ENCODE measurements at regions of chr9 and their contacts with region 1.

Region 1: GRCh38 chr9:115013998-115014397 is 83.6 kb upstream of the TNFSF8 start:
- DNase-seq: peak; percentile 59 to 74 (median 64)
- ATAC-seq: peak; percentile 77
- H3K4me3 ChIP-seq: no peak overlapping the region
- H3K4me1 ChIP-seq: no peaks in the 10 kb centered on the region
- CTCF ChIP-seq: peak; percentile 57

Region 2: GRCh38 chr9:114681594-114682332 is 332.2 kb before region 1 on chr9 and contains the start of gene TEX48:
- intact Hi-C with region 1: loop called (anchors 2 to 5 kb)
- DNase-seq: peak; percentile 59 to 90 (median 63)
- ATAC-seq: peak; percentile 99
- H3K4me3 ChIP-seq: no peak within 1 kb of the TSS
- H3K4me1 ChIP-seq: no peaks in the 10 kb centered on the region
- CTCF ChIP-seq: peak; percentile 57
- total RNA-seq, gene TEX48: not detected

Region 3: DNA sequence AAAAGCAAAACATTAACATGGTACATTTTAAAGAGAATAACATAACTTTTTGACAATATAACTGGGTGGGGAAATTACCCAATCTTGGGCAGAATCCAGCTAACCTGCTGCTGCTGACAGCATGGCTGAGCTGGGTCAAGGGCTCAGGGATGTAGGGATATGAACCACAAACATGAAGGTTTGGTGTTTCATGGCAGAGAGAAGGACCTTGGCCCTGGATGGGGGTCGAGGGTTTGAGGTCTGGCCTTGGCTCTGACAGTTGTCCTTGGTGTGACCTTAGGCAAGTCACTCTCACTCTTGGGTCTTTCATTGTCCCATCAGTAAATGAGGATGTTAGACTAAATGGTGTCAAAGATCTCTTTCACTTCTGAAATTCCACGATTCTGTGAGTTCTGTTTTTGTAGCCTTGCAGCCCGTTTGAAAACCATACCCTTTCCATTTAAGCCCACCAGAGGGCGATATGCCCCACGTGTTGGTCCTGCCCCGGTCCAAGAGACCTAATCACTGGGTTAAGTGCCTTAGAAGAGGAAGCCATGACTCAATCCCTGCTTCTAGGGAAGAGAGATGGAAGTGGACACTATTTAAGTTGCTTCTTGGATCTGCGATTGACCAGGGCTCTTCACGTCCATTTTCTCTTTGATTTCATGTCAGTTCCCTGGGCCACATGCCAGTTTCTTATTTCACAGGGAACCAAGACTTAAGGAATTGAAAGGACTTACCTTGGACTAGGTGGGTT is 275.2 kb before region 1 on chr9:
- intact Hi-C with region 1: loop called (anchors 5 to 10 kb)
- DNase-seq: peak in 2 of 3 donors; percentile 70 to 84
- ATAC-seq: peak; percentile 99
- H3K4me3 ChIP-seq: no peak overlapping the region
- H3K4me1 ChIP-seq: no peaks in the 10 kb centered on the region
- CTCF ChIP-seq: peak; percentile 54

Region 4: GRCh38 chr9:115524453-115525059 is 510.6 kb after region 1 on chr9:
- intact Hi-C with region 1: loop called in 1 of 2 experiments (anchors 10 kb)
- DNase-seq: peak in 1 of 3 donors; percentile 61
- ATAC-seq: peak; percentile 61
- H3K4me3 ChIP-seq: no peak overlapping the region
- H3K4me1 ChIP-seq: no peaks in the 10 kb centered on the region
- CTCF ChIP-seq: peak; percentile 33

Region 5: DNA sequence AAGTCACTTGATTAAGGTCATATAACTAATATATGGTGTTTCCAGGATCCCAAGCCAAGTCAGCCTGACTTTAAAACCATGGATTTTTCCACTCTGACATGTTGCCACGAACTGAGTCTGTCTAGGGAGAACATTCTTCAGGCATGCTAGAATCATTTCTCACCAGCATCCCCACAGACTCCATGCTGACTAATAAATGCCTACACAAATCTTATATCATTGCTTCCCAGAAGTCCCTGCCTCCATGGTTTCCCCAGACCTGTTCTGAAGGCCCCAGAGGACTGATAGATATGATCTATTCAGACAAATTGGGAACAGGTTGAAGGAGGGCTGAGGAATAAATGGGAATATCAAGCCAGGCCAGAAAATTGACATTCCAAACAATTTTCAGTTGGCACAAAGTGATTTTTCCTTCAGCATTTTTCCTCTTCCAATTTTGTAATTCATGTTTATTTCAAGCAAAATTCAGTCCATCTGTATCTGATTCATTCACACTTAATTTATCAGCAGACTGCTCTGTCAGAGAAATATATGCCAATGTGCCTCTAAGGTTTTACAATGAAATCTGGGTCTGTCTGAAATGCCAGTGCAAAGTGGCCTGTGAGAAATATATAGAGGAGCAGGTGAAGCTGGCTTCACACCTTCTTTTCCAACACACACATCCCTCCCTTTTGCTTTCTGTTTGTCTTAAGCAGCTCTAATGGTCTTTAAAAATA is 517.6 kb after region 1 on chr9:
- intact Hi-C with region 1: loop called (anchors 10 kb)
- DNase-seq: no peak
- ATAC-seq: no peak
- H3K4me3 ChIP-seq: no peak overlapping the region
- H3K4me1 ChIP-seq: no peaks in the 10 kb centered on the region
- CTCF ChIP-seq: no peak